Activated CD8-positive, alpha-beta T cell treated with anti-CD3 and anti-CD28 coated beads, Interleukin-2, amount 10 ng/mL, durations not matched to agents 7 days and 5 days (primary cell): ENCODE measurements at regions of chr17 and their contacts with region 1.

Region 1: DNA sequence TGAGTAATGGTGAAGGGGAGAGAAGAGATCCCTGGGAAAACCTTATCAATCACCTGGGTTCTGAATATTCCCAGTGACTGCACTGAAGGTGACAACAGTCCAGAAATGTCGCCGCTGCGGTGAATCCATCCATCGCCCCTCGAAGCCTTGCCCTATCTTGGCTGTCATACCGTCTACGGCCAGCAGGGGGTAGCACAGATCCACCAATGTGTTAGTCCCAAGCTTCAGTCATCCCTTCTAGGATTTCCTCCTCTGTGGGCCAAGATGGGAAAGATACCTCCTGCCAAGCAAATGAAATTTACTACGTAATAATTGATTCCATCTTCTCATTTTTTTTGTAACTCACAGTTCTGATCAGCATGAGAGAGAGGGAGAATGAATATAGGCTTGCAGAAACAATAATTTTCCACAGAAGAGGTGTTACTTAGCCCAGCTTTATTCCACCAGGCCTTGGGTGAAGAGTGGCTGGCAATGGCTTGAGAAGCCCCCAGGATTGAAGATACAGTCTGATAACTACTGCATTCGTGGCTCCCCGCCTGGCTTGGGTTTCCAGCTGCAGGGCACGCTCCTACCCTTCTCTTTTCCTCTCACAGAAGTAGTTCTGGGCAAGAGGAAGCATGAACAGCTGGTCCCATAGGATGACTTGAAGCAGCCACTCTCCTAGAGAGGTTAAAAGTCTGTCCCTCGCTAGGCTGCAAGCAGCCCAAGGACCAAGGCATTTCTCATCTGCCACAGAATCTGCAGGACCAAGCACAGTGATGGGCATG is 2.6 kb upstream of the FMNL1 start:
- DNase-seq: peak; percentile 89
- ATAC-seq: no peak
- H3K4me3 Mint-ChIP-seq: peak overlapping the region; percentile 80
- H3K27ac Mint-ChIP-seq: peak overlapping the region; percentile 86
- H3K4me1 Mint-ChIP-seq: peaks cover 37% of the 10 kb centered on the region
- H3K27me3 Mint-ChIP-seq: no peaks in the 10 kb centered on the region

Region 2: GRCh38 chr17:45127598-45128300 is 91.3 kb before region 1 on chr17:
- CTCF ChIA-PET with region 1: no interaction called
- POLR2A ChIA-PET with region 1: no interaction called
- DNase-seq: no peak
- ATAC-seq: no peak
- H3K4me3 Mint-ChIP-seq: no peak overlapping the region
- H3K27ac Mint-ChIP-seq: no peak overlapping the region
- H3K4me1 Mint-ChIP-seq: peaks cover 2% of the 10 kb centered on the region
- H3K27me3 Mint-ChIP-seq: peaks cover 10% of the 10 kb centered on the region

Region 3: DNA sequence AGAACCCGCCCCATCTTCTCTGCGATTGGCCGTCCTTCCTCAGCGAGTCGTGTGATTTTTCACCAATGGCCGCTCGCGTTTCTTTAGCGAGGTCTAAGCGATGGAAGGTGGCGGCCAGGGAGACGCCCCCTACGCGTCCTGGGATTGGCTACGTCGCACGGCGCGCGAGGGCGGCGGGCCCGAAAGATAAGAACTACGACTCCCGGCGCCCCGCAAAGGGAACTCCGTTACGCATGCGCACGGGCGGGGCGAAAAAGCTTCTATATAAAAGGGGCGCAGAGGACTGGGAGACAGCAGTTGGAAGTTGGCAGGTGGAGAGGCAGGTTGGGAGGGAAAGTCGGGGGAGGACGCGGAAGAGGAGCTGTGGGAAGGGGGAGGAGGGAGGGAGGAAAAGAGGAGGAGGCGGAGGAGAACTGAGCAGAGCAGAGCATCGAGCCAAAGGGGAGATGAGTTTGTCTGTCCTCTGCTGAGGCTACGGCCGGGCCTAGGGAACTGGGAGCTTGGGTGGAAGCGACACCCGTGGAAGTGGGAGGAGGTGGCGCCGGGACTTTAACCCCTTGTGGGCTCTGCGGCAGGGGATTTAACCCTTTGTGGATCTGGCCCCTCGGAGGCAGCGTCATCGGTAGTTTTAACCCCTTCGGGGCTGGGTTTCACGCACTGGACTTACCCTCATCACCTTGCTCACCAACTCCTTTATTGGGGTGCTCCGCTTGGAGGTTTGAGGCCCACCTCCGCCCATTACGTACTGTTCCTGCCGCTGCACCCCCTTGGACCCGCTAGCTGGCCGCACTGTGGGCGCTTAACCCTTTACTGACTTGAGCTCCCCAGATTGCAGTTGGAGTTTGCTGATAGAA is 70.7 kb before region 1 on chr17 and contains the start of gene HEXIM1:
- CTCF ChIA-PET with region 1: interaction called, 70 read pairs
- POLR2A ChIA-PET with region 1: interaction called, 97 read pairs
- DNase-seq: peak; percentile 99
- ATAC-seq: peak; percentile 80
- H3K4me3 Mint-ChIP-seq: peak within 1 kb of the TSS; percentile 95
- H3K27ac Mint-ChIP-seq: peak within 1 kb of the TSS; percentile 100
- H3K4me1 Mint-ChIP-seq: peaks cover 39% of the 10 kb centered on the region
- H3K27me3 Mint-ChIP-seq: no peaks in the 10 kb centered on the region
- total RNA-seq, gene HEXIM1: 29.2 to 29.4 TPM

Region 4: GRCh38 chr17:45235416-45236281 is 16.6 kb after region 1 on chr17:
- CTCF ChIA-PET with region 1: interaction called, 410 read pairs
- POLR2A ChIA-PET with region 1: interaction called, 97 read pairs
- DNase-seq: peak; percentile 86
- ATAC-seq: peak; percentile 68
- H3K4me3 Mint-ChIP-seq: no peak overlapping the region
- H3K27ac Mint-ChIP-seq: peak overlapping the region; percentile 60
- H3K4me1 Mint-ChIP-seq: peaks cover 62% of the 10 kb centered on the region
- H3K27me3 Mint-ChIP-seq: no peaks in the 10 kb centered on the region

Region 5: DNA sequence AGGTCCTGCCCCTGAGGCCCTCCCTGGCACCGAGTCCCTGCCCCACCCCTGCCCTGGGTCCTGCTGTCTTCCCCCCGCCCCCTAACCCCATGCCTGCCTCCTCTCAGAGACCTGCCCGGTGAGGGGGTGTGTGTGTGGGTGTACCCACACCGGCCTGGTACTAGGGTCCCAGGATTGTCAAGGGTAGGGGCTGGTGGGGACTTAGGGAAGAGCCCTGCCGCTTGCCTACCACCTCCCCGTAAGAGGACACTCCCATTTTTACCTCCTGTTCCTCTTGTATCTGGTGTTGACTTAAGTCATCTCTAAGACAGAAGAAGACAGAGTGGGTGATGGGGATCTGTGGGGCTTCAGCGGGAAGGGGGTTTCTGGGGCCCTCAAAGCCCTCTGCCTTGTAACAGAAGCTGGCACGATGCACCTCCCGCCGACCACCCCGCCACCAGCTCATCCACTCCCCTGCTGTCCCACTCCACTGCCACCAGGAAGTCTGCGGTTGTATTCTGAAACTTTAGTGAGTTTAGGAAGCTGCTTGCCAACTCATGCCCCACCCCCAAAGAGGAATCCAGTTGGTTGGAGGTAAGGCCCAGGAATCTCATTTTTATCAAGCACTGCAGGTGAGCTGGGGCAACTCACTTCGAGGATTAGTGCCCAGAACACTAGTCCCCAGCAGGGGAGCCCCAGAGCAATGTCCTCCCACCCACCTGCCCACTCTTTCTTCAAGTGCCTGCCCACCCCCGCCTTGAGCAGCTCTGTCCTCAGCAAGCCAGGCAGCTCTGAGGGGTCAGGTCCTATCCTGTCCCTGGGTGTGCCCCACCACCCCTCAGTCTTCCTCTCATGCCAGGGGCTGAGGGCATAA is 37.3 kb after region 1 on chr17:
- CTCF ChIA-PET with region 1: interaction called, 55 read pairs
- POLR2A ChIA-PET with region 1: interaction called, 5 read pairs
- DNase-seq: peak; percentile 35
- ATAC-seq: peak; percentile 58
- H3K4me3 Mint-ChIP-seq: peak overlapping the region; percentile 45
- H3K27ac Mint-ChIP-seq: peak overlapping the region; percentile 78
- H3K4me1 Mint-ChIP-seq: peaks cover 65% of the 10 kb centered on the region
- H3K27me3 Mint-ChIP-seq: no peaks in the 10 kb centered on the region

Region 6: DNA sequence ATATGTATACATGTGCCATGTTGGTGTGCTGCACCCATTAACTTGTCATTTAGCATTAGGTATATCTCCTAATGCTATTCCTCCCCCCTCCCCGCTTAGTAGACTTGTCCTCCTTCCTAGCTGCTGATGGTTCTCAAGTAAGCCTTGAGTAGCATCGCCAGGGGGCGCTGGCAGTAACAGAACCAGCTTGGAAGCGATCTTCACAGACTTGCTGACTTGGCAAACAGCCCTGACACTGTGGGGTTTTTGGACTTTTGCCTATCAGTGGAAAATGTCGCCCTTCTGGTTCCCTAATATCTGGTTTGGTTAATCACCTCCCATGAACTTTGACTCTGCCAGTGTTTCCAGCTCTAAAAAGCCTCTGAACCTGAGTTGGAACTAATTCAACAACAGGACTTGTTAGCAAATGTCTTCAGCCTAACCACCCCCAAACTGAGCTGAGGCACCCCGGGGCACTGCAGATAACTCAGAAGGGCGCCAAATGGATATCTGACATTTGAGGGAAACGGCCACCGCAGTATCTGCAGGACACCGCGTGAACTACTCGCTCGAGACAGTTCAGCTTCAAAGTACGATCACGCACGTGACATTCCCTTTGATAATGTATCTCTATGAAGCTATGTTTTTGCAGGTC is 58.3 kb after region 1 on chr17:
- CTCF ChIA-PET with region 1: interaction called, 79 read pairs
- POLR2A ChIA-PET with region 1: interaction called, 5 read pairs
- DNase-seq: peak; percentile 93
- ATAC-seq: peak; percentile 91
- H3K4me3 Mint-ChIP-seq: no peak overlapping the region
- H3K27ac Mint-ChIP-seq: peak overlapping the region; percentile 3
- H3K4me1 Mint-ChIP-seq: peaks cover 17% of the 10 kb centered on the region
- H3K27me3 Mint-ChIP-seq: no peaks in the 10 kb centered on the region

Region 7: DNA sequence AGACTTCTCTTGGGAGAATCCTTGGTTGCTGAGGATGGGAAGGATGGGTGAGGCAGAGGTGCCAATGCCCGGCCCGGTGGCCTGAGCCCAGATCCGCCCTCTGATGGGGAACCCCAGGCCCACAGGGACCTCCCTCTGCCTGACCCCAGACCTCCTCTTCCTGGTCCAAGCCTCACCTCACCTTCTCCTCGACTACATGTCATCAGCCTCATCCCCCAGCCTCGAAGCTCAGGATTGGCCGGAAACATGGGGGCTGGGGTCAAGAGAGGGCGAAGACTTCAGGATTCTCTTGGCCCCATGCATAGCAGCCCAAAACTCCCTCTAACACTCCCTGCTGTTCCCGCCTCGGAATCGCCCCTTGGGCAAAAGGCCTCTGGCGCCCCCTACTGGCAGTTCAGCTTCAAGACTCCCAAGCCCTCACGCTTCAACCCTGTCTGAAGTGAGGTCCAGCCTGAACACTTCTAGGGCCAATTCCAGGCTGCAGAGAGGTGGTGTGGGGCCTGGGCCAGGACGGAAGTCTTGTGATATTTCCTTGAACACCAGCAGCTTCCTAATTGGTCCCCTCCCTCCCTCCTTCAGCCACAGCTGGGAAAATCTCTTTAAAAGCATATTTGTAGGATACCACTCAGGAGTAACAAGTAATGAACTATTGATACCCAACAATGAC is 166.4 kb after region 1 on chr17:
- CTCF ChIA-PET with region 1: interaction called, 68 read pairs
- POLR2A ChIA-PET with region 1: interaction called, 3 read pairs
- DNase-seq: peak; percentile 93
- ATAC-seq: peak; percentile 95
- H3K4me3 Mint-ChIP-seq: no peak overlapping the region
- H3K27ac Mint-ChIP-seq: peak overlapping the region; percentile 74
- H3K4me1 Mint-ChIP-seq: peaks cover 33% of the 10 kb centered on the region
- H3K27me3 Mint-ChIP-seq: peaks cover 5% of the 10 kb centered on the region